ENCODE measurements at regions of chr6 and their contacts with region 1.

Region 1: DNA sequence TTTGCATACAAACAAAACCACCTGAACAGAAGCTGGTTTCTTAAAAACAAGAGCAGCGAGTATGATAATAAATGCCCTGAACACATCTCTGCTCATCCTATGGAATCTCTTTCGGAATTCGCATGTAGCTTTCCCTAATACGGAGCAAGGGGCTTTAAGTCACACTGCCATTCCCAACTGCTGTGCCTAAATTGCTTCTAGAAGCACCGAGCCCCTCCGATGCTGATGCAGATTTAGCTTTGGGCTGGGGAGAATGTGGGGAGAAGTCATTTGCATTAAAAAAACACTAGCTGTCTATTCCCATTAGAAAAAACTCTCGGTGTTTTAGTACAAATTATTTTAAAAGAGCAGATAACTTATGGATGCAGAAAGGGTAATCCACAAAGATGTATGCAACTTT is 76.9 kb downstream of the CD83 start:
- DNase-seq: no peak
- ATAC-seq: no peak

Region 2: DNA sequence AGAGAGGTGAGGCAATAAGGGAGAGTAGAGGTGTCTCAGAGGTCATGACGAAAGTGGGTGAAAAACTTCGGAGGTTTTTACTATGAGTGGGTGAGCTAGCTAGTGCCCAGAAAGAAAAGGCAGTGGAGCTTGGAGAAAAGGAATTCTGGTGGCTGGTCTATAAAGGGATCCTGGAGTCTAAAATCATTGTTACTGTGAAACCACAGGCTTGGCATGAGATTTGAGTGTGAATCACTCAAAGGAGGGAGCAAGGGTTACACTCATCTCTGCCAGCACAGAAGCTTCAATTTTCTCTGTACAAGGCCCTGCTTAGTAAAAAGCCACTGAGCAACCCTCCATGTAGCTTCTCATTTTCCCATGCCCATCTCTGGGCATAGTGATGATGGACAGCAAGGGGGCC is 29.4 kb before region 1 on chr6:
- intact Hi-C with region 1: loop called (anchors 2 kb)
- DNase-seq: no peak
- ATAC-seq: no peak

Measured in sciatic nerve (tissue), 2 donors.